CD8-positive, alpha-beta T cell (primary cell): ENCODE measurements at regions of chr14 and their contacts with region 1.

Region 1: DNA sequence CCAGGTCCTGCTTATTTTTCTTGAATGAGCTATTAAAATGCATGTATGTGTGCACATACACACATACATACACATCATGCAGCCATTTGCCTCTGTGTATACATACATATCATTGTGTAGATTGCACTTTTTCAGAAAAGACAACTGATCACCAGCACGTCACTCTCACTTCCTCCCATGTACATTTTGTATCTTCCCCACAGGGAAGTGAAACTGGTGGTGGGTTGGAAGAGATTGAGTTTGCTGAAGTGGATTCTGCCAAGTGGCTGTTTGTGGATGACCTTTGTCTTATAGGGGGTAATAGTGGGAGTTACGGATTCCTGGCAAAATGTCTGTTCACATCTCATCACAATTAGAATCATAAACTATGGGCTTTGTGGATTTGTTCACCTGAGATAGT is 448.6 kb downstream of the RAD51B start:
- DNase-seq: peak in 1 of 9 experiments; percentile 57
- ATAC-seq: peak; percentile 40
- H3K4me3 ChIP-seq: no peak overlapping the region
- H3K4me3 Mint-ChIP-seq: peak overlapping the region; percentile 2
- H3K27ac ChIP-seq: peak overlapping the region in 1 of 2 experiments; percentile 49
- H3K27ac Mint-ChIP-seq: peak overlapping the region; percentile 81
- H3K4me1 ChIP-seq: peaks cover 35% of the 10 kb centered on the region
- H3K4me1 Mint-ChIP-seq: peaks cover 45% of the 10 kb centered on the region
- H3K27me3 ChIP-seq: no peaks in the 10 kb centered on the region
- H3K27me3 Mint-ChIP-seq: no peaks in the 10 kb centered on the region
- CTCF ChIP-seq: no peak

Region 2: GRCh38 chr14:68297876-68298469 is 29.8 kb after region 1 on chr14:
- CTCF ChIA-PET with region 1: no interaction called
- POLR2A ChIA-PET with region 1: no interaction called
- intact Hi-C with region 1: loop called in 1 of 2 experiments (anchors 5 kb)
- DNase-seq: no peak
- ATAC-seq: no peak
- H3K4me3 ChIP-seq: no peak overlapping the region
- H3K4me3 Mint-ChIP-seq: no peak overlapping the region
- H3K27ac ChIP-seq: no peak overlapping the region
- H3K27ac Mint-ChIP-seq: peak overlapping the region; percentile 81
- H3K4me1 ChIP-seq: peaks cover 28% of the 10 kb centered on the region
- H3K4me1 Mint-ChIP-seq: peaks cover 43% of the 10 kb centered on the region
- H3K27me3 ChIP-seq: no peaks in the 10 kb centered on the region
- H3K27me3 Mint-ChIP-seq: no peaks in the 10 kb centered on the region
- CTCF ChIP-seq: no peak